ENCODE measurements at regions of chr12 and their contacts with region 1.

Region 1: GRCh38 chr12:14803011-14803829 is at the starts of genes C12orf60 and WBP11:
- DNase-seq: peak; percentile 80 to 99 (median 94)
- H3K4me3 ChIP-seq: peak within 1 kb of the TSS; percentile 70 to 100 (median 95)
- H3K27ac ChIP-seq: peak within 1 kb of the TSS; percentile 29 to 97 (median 85)
- H3K27me3 ChIP-seq: no peaks in the 10 kb centered on the region
- CTCF ChIP-seq: peak in 31 of 56 donors; percentile 4 to 57 (median 26)
- total RNA-seq, gene C12orf60: 0.86 to 6.0 (median 2.5) TPM
- total RNA-seq, gene WBP11: 27.9 to 83.0 (median 52.0) TPM

Region 2: DNA sequence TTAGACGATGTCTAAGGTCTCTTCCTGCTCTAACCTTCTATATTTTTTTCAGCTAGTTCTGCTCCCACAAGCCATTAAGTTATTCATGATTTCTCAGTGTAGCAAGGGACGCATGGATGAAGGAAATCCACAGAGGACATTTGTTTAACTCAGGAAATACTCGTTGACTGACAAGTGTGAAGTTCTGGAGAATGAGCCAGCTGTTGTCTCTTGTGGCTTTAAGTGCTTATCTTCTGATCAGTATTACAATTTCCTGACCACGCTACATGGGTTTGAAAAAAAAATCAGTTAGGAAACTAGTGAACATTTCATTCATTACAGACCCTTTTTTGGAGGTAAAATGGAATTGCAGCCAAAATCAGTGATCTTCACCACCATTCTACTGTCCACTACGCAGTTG is 160.0 kb before region 1 on chr12:
- intact Hi-C with region 1: no loop called
- DNase-seq: no peak
- H3K4me3 ChIP-seq: no peak overlapping the region
- H3K27ac ChIP-seq: no peak overlapping the region
- H3K27me3 ChIP-seq: no peaks in the 10 kb centered on the region
- CTCF ChIP-seq: no peak

Region 3: DNA sequence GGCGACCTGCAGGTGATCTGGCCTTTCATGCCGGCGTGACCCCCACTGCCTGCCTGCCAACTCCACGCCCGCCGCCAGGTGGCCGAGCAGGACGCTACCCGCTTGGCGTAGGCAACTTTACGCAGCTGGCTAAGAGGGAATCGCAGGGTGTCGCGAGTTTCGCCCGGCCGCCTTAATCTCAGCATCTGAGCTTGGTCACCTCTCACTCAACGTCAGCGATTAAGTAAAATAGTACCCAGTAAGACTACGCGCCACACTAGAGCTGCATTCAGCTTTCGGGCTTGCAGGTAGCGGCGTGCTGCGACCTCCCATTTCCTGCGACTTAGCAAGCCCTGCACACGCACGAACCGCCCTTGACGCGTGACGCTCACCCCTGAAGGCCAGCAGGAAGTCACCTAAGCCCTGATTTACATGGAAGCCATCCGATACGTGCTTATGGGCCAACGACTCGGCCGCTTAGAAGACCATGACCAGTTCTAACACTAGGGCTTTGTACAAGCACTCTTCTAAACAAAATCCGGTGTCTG is 33.2 kb before region 1 on chr12:
- intact Hi-C with region 1: loop called in 1 of 2 experiments (anchors 2 kb)
- DNase-seq: peak; percentile 55 to 82 (median 73)
- H3K4me3 ChIP-seq: peak overlapping the region; percentile 71 to 98 (median 86)
- H3K27ac ChIP-seq: peak overlapping the region; percentile 51 to 98 (median 89)
- H3K27me3 ChIP-seq: no peaks in the 10 kb centered on the region
- CTCF ChIP-seq: peak; percentile 23 to 81 (median 68)

Measured in dorsolateral prefrontal cortex (tissue), 120 donors.